Caco-2 (cell line): ENCODE measurements at regions of chr14 and their contacts with region 1.

Region 1: DNA sequence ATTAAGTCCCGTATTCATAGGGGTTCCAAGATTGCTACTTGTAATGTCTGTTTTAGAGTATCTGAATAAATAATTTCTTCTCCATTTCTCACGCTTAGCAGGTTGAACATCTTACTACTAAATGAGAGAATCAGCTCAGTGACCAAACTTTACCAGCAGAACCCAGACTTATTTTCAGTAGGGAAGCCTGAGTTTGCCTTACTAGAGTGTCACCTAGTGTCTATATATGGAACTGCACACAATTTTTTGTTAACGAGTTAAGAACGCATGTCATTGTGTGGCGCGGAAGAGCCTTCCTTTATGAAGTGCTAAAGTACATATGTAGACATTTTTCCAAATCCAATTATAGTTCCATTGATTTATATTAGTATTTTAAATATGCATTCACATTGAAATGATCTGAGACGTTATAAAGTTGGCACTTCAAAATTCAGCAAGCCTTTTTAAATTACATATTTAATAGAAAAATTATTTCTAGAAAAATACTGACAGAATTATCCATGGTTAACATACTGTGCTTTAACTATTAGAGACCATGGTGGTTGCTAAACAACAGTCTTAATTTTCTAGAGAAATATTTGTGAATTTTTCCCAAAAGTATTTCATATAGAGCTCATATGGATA is 88.3 kb downstream of the RPS29 start:
- DNase-seq: peak in 1 of 2 experiments; percentile 69
- H3K4me3 ChIP-seq: no peak overlapping the region
- H3K4me3 Mint-ChIP-seq: no peak overlapping the region
- H3K27ac Mint-ChIP-seq: no peak overlapping the region
- H3K4me1 ChIP-seq: no peaks in the 10 kb centered on the region
- H3K4me1 Mint-ChIP-seq: peaks cover 13% of the 10 kb centered on the region
- H3K27me3 ChIP-seq: no peaks in the 10 kb centered on the region
- H3K27me3 Mint-ChIP-seq: no peaks in the 10 kb centered on the region
- CTCF ChIP-seq: peak; percentile 74 to 84

Region 2: GRCh38 chr14:49461529-49462401 is 36.1 kb before region 1 on chr14:
- CTCF ChIA-PET with region 1: interaction called, 102 read pairs
- POLR2A ChIA-PET with region 1: interaction called, 4 read pairs
- intact Hi-C with region 1: loop called (anchors 1 kb)
- DNase-seq: peak; percentile 52 to 76
- H3K4me3 ChIP-seq: no peak overlapping the region
- H3K4me3 Mint-ChIP-seq: no peak overlapping the region
- H3K27ac Mint-ChIP-seq: no peak overlapping the region
- H3K4me1 ChIP-seq: peaks cover 6% of the 10 kb centered on the region; the same call in 1 of the 2 replicates
- H3K4me1 Mint-ChIP-seq: no peaks in the 10 kb centered on the region
- H3K27me3 ChIP-seq: no peaks in the 10 kb centered on the region
- H3K27me3 Mint-ChIP-seq: no peaks in the 10 kb centered on the region
- CTCF ChIP-seq: peak; percentile 55 to 60

Region 3: GRCh38 chr14:49732896-49733295 is 235.1 kb after region 1 on chr14:
- CTCF ChIA-PET with region 1: no interaction called
- POLR2A ChIA-PET with region 1: no interaction called
- intact Hi-C with region 1: no loop called
- DNase-seq: no peak
- H3K4me3 ChIP-seq: no peak overlapping the region
- H3K4me3 Mint-ChIP-seq: no peak overlapping the region
- H3K27ac Mint-ChIP-seq: no peak overlapping the region
- H3K4me1 ChIP-seq: no peaks in the 10 kb centered on the region
- H3K4me1 Mint-ChIP-seq: no peaks in the 10 kb centered on the region
- H3K27me3 ChIP-seq: no peaks in the 10 kb centered on the region
- H3K27me3 Mint-ChIP-seq: no peaks in the 10 kb centered on the region
- CTCF ChIP-seq: no peak